Pancreas (tissue), 10 donors: ENCODE measurements at regions of chr19 and their contacts with region 1.

Region 1: GRCh38 chr19:35347171-35347929 is at the start of gene FFAR1:
- DNase-seq: peak in 1 of 6 donors; percentile 54
- ATAC-seq: peak in 1 of 4 donors; percentile 53
- H3K4me3 ChIP-seq: no peak within 1 kb of the TSS
- H3K27ac ChIP-seq: peak within 1 kb of the TSS in 1 of 4 donors; percentile 33
- H3K4me1 ChIP-seq: no peaks in the 10 kb centered on the region
- H3K27me3 ChIP-seq: no peaks in the 10 kb centered on the region
- CTCF ChIP-seq: no peak
- total RNA-seq, gene FFAR1: 0.60 to 3.5 (median 1.8) TPM

Region 2: DNA sequence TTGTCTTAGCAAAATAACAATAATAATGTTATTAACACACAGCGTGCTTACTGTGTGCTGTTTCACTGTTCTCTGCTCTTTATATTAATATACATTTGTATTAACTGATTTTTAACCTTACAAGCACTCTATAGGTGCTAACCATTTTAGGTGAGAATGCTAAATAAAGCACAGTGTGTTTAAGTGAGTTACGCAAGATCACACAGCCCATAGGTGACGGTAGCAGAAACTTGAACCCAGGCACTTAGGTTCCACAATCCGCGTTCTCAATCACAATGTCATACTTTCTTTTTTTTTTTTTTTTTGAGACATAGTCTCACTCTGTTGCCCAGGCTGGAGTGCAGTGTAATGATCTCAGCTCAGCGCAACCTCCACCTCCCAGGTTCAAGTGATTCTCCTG is 414.9 kb before region 1 on chr19:
- intact Hi-C with region 1: no loop called
- DNase-seq: no peak
- ATAC-seq: no peak
- H3K4me3 ChIP-seq: no peak overlapping the region
- H3K27ac ChIP-seq: no peak overlapping the region
- H3K4me1 ChIP-seq: peaks cover 0 to 5% (median 5%) of the 10 kb centered on the region in 3 donors
- H3K27me3 ChIP-seq: no peaks in the 10 kb centered on the region
- CTCF ChIP-seq: no peak

Region 3: GRCh38 chr19:35476149-35476548 is 128.8 kb after region 1 on chr19:
- intact Hi-C with region 1: loop called in 2 of 3 experiments (anchors 2 to 10 kb)
- DNase-seq: no peak
- ATAC-seq: no peak
- H3K4me3 ChIP-seq: no peak overlapping the region
- H3K27ac ChIP-seq: no peak overlapping the region
- H3K4me1 ChIP-seq: no peaks in the 10 kb centered on the region
- H3K27me3 ChIP-seq: no peaks in the 10 kb centered on the region
- CTCF ChIP-seq: no peak